Activated CD8-positive, alpha-beta T cell treated with anti-CD3 and anti-CD28 coated beads, Interleukin-2, amount 10 ng/mL, durations not matched to agents 7 days and 5 days (primary cell): ENCODE measurements at regions of chr17 and their contacts with region 1.

Region 1: GRCh38 chr17:49730078-49730784 is 22.5 kb upstream of the SLC35B1 start:
- DNase-seq: no peak
- ATAC-seq: no peak
- H3K4me3 Mint-ChIP-seq: no peak overlapping the region
- H3K27ac Mint-ChIP-seq: no peak overlapping the region
- H3K4me1 Mint-ChIP-seq: peaks cover 35% of the 10 kb centered on the region
- H3K27me3 Mint-ChIP-seq: no peaks in the 10 kb centered on the region

Region 2: DNA sequence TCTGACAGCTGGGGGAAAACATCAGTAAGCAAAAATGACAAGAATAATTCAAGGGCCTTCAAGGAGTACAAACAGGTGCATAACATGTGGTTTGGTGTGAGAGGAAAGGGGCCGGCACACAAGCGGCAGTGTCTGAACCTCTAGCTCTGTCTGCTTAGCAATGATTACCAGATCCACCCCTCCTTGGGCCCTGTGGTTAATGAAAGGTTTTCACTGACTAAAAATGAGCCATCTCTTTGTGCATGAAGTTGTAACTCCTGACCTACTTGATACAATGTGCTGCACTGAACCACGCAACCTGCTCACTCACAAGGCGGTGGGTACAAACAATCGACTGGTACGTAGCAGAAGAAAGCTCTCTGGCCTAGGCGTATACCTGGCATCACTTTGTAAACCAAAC is 18.6 kb after region 1 on chr17:
- CTCF ChIA-PET with region 1: interaction called, 12 read pairs
- POLR2A ChIA-PET with region 1: interaction called, 3 read pairs
- DNase-seq: peak; percentile 77
- ATAC-seq: peak; percentile 79
- H3K4me3 Mint-ChIP-seq: peak overlapping the region; percentile 68
- H3K27ac Mint-ChIP-seq: peak overlapping the region; percentile 89
- H3K4me1 Mint-ChIP-seq: peaks cover 77% of the 10 kb centered on the region
- H3K27me3 Mint-ChIP-seq: no peaks in the 10 kb centered on the region